Activated CD4-positive, alpha-beta T cell treated with anti-CD3 and anti-CD28 coated beads, Interleukin-2, amount 10 ng/mL, durations not matched to agents 7 days and 5 days (primary cell): ENCODE measurements at regions of chr18 and their contacts with region 1.

Region 1: DNA sequence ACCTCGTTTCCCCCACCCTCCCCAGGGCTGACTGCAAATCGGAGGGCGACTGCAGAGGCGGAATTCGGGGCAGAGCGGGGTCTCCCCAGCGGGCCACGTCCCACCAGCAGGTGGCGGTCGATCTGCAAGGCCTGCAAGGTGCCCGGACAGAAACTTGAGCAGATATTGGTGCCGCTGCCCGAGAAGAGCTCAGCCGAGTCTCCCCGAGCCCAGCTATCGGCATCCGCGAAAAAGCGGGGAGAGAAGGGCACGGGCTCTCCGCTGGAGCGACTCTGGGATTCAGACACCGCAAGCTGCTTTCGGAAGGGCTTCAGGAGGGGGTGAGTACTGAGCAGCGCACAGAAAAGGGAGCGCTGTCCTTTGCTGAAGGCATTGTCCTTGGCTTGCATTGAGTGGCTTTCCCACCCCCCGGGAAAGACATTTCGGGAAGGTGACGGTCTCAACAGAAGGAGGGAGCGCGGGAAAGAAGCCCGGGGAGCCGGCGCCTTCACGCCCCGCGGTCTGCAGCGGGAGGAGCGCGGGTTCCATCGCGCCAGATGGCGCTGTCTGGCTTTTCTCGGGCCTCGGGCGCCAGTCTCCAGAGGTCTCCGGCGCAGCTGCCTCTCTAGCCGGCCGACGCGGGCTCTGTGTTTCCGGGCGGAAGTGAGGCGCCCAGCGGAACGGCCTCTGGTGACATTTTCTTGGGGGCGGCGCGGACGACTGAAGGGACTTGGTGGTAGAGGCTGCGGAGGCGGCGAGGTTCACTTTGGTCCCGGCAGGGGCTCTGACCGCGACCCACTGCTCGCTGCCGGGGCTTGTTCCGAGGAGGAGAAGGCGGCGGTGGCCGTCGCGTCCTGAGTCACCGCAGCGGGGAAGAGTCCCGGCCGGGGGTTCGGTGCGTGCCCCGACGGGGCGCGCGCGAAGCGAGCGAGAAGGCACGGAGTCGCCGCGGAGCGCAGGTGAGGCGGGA is 69.5 kb downstream of the HAUS1 start:
- DNase-seq: peak; percentile 95
- H3K4me3 Mint-ChIP-seq: peak overlapping the region; percentile 99
- H3K27ac Mint-ChIP-seq: peak overlapping the region; percentile 100
- H3K4me1 Mint-ChIP-seq: peaks cover 59% of the 10 kb centered on the region
- H3K27me3 Mint-ChIP-seq: no peaks in the 10 kb centered on the region

Region 2: GRCh38 chr18:46199515-46200147 is 26.0 kb after region 1 on chr18:
- CTCF ChIA-PET with region 1: interaction called, 19 read pairs
- POLR2A ChIA-PET with region 1: no interaction called
- DNase-seq: no peak
- H3K4me3 Mint-ChIP-seq: no peak overlapping the region
- H3K27ac Mint-ChIP-seq: peak overlapping the region; percentile 54
- H3K4me1 Mint-ChIP-seq: peaks cover 58% of the 10 kb centered on the region
- H3K27me3 Mint-ChIP-seq: no peaks in the 10 kb centered on the region

Region 3: DNA sequence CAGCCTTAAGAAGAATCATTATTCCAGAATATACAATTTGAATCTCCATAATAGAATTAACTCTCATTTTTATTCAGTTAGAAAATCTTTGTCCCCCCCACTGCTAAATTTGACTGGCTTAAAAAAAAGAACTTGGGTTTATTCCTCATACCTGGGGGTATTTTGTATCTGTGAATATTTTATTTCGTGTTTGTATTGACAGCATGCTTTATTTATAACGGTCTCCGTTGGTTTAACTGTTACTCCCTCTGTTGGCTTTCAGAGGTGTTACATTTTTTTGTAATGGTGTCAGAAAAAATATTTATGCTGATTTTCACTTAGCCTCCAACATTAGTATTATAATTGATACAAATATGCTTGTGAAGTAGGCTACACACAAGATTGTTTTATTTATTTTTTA is 39.6 kb after region 1 on chr18:
- CTCF ChIA-PET with region 1: interaction called, 14 read pairs
- POLR2A ChIA-PET with region 1: no interaction called
- DNase-seq: no peak
- H3K4me3 Mint-ChIP-seq: no peak overlapping the region
- H3K27ac Mint-ChIP-seq: no peak overlapping the region
- H3K4me1 Mint-ChIP-seq: peaks cover 74% of the 10 kb centered on the region
- H3K27me3 Mint-ChIP-seq: no peaks in the 10 kb centered on the region

Region 4: DNA sequence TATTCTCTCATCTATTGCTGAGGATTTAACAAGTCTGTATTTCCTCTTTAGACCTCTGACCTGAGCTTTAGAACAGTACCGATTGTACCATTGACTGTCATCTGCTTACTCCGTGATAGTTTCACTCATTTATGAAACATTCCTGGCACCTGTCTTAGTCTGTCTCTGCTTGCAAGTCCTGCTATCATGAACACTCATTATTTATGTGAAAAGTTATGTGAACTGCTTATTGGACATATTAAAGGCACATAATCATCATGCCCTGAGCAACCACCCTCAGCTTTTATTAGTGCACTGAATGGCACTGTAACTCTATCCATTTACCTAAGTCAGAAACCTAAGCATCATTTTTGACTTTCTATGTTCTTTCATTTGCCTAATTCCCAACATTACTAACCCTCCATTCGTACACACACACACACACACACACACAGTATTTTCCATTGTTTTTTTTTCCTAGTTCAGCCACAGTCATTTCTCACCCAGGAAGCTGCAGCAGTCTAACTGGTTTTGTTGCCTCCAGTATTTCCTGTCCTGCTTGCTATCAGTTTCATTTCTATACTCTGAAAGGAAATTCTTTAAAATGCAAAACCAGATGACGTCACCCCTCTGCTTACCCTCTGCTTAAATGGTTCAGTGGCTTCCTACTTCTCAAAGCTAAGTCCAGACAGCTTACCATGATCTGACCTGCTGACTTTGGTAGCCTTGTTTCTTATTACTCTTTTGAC is 76.6 kb after region 1 on chr18:
- CTCF ChIA-PET with region 1: interaction called, 24 read pairs
- POLR2A ChIA-PET with region 1: interaction called, 6 read pairs
- DNase-seq: peak; percentile 81
- H3K4me3 Mint-ChIP-seq: peak overlapping the region; percentile 70
- H3K27ac Mint-ChIP-seq: peak overlapping the region; percentile 95
- H3K4me1 Mint-ChIP-seq: peaks cover 75% of the 10 kb centered on the region
- H3K27me3 Mint-ChIP-seq: no peaks in the 10 kb centered on the region

Region 5: DNA sequence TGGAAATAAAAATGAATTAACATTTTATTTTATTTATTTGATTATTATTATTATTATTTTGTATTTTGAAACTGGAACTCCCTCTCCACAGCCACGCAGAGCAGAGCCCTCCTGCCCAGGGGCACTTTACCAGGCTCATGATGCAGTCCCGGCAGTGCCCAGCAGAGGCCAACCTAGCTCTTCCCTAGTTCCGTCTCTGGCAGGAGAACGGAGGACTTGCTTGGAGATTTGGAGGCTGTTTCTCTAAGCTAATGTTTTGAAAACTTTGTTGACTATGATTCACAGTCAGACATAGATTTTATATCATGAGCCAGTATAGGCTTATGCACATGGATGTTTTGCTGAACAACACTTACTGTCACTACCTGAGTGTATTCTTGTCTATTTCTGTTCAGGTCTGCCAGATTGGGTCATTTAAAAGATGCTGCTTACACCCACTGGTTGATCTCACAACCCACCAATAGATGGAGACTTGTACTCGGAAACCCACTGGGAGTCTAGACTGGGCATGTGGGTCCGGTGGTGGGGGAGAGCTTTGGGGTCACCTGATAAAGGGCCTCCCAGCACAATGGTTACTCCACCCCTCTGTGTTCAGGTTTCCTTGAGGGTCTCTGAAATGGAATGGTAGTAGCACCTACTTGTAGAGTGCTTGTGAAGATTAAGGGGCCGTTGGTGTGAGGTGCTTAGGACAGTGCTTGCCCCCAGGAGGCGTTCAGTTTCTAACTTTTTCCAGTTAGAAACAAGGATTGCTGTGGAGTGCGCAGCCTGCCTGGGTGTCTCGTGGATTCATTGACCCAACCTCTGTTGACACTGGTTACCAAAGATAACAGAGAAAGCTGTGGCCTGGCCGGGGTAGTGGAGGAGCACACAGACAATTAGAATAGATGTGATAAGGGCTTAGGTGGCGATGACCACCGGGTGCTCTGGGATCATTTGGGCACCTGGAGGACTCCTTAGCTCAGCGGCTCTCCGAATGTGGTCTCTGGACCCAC is 107.8 kb after region 1 on chr18:
- CTCF ChIA-PET with region 1: interaction called, 11 read pairs
- POLR2A ChIA-PET with region 1: no interaction called
- DNase-seq: peak; percentile 64
- H3K4me3 Mint-ChIP-seq: no peak overlapping the region
- H3K27ac Mint-ChIP-seq: no peak overlapping the region
- H3K4me1 Mint-ChIP-seq: peaks cover 10% of the 10 kb centered on the region
- H3K27me3 Mint-ChIP-seq: no peaks in the 10 kb centered on the region